ENCODE measurements at regions of chr2 and their contacts with region 1.

Region 1: GRCh38 chr2:135663148-135663700 is 78.4 kb upstream of the UBXN4 start:
- DNase-seq: no peak
- H3K4me3 ChIP-seq: no peak overlapping the region
- H3K4me3 Mint-ChIP-seq: no peak overlapping the region
- H3K27ac ChIP-seq: no peak overlapping the region
- H3K27ac Mint-ChIP-seq: no peak overlapping the region
- H3K4me1 ChIP-seq: no peaks in the 10 kb centered on the region
- H3K4me1 Mint-ChIP-seq: peaks cover 10 to 21% (median 18%) of the 10 kb centered on the region in 3 donors
- H3K27me3 ChIP-seq: no peaks in the 10 kb centered on the region
- H3K27me3 Mint-ChIP-seq: no peaks in the 10 kb centered on the region

Region 2: GRCh38 chr2:135728064-135728743 is 65.0 kb after region 1 on chr2:
- CTCF ChIA-PET with region 1: no interaction called
- POLR2A ChIA-PET with region 1: interaction called, 16 read pairs
- DNase-seq: no peak
- H3K4me3 ChIP-seq: no peak overlapping the region
- H3K4me3 Mint-ChIP-seq: no peak overlapping the region
- H3K27ac ChIP-seq: no peak overlapping the region
- H3K27ac Mint-ChIP-seq: no peak overlapping the region
- H3K4me1 ChIP-seq: no peaks in the 10 kb centered on the region
- H3K4me1 Mint-ChIP-seq: no peaks in the 10 kb centered on the region
- H3K27me3 ChIP-seq: no peaks in the 10 kb centered on the region
- H3K27me3 Mint-ChIP-seq: no peaks in the 10 kb centered on the region